Naive thymus-derived CD4-positive, alpha-beta T cell (primary cell): ENCODE measurements at regions of chr3 and their contacts with region 1.

Region 1: DNA sequence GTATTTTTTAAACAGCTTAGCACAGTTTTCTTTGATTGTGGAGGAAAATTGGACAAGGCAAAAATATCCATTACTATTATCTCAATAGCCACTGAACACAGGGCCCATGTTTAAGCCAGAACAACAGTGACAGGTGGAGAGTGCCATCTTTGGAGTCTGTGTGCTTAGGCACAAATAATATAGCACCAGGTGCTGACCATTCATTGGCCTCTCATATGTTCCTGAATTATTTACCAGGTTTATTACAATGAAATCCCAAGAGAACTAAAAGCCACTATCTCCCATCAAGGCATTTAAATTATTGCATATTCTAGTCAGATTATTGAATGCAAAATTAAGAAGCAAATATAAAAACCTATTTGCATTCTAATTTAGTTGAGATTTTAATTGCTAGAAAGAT is 39.6 kb downstream of the GPR156 start:
- DNase-seq: no peak
- ATAC-seq: no peak
- H3K4me3 ChIP-seq: no peak overlapping the region
- H3K4me3 Mint-ChIP-seq: no peak overlapping the region
- H3K27ac ChIP-seq: no peak overlapping the region
- H3K27ac Mint-ChIP-seq: no peak overlapping the region
- H3K4me1 ChIP-seq: no peaks in the 10 kb centered on the region
- H3K4me1 Mint-ChIP-seq: no peaks in the 10 kb centered on the region
- H3K27me3 ChIP-seq: no peaks in the 10 kb centered on the region
- H3K27me3 Mint-ChIP-seq: peaks cover 21 to 38% (median 25%) of the 10 kb centered on the region in 5 donors

Region 2: DNA sequence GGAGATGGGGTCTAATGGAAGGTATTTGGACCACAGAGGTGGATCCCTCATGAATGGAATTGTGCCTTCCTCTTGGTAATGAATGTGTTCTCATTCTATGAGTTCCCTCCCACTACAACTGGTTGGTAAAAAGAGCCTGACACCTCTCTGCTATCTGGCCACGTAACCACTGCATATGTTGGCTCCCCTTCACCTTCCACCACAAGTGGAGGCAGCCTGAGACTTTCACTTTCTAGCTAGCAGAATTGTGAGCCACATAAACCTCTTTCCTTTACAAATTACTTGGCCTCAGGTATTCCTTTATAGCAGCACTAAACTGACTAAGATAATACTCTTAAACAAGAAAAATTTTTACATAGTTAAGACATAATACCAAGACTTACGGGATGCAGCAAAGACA is 308.2 kb before region 1 on chr3:
- CTCF ChIA-PET with region 1: no interaction called
- POLR2A ChIA-PET with region 1: no interaction called
- intact Hi-C with region 1: no loop called
- DNase-seq: peak in 3 of 9 donors; percentile 8 to 49 (median 12)
- ATAC-seq: peak; percentile 73
- H3K4me3 ChIP-seq: no peak overlapping the region
- H3K4me3 Mint-ChIP-seq: peak overlapping the region; percentile 21 to 84 (median 42)
- H3K27ac ChIP-seq: no peak overlapping the region
- H3K27ac Mint-ChIP-seq: peak overlapping the region; percentile 4 to 83 (median 37)
- H3K4me1 ChIP-seq: peaks cover 0 to 11% of the 10 kb centered on the region in 2 donors
- H3K4me1 Mint-ChIP-seq: peaks cover 19 to 78% (median 68%) of the 10 kb centered on the region in 7 donors
- H3K27me3 ChIP-seq: no peaks in the 10 kb centered on the region
- H3K27me3 Mint-ChIP-seq: no peaks in the 10 kb centered on the region

Region 3: DNA sequence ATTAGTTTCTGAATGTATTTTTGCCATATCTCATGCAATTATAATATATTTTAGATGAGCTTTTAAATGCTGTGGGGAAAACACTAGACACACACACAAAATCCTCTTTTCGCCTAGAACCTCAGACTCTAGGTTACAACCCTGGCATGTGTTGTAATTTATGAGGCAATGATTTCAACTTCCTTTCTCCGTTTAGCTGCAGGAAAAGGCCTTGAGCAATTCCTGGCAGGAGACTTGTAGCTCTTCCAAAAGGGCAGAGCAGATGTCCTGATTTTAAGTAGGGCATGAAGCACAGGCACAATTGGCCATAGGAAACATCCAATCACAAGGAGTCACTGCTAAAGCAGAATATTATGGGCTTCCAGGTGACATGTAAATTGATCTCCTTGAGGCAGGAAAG is 42.4 kb before region 1 on chr3:
- CTCF ChIA-PET with region 1: no interaction called
- POLR2A ChIA-PET with region 1: no interaction called
- intact Hi-C with region 1: no loop called
- DNase-seq: no peak
- ATAC-seq: peak; percentile 44
- H3K4me3 ChIP-seq: no peak overlapping the region
- H3K4me3 Mint-ChIP-seq: no peak overlapping the region
- H3K27ac ChIP-seq: no peak overlapping the region
- H3K27ac Mint-ChIP-seq: no peak overlapping the region
- H3K4me1 ChIP-seq: no peaks in the 10 kb centered on the region
- H3K4me1 Mint-ChIP-seq: no peaks in the 10 kb centered on the region
- H3K27me3 ChIP-seq: no peaks in the 10 kb centered on the region
- H3K27me3 Mint-ChIP-seq: peaks cover 0 to 4% (median 0%) of the 10 kb centered on the region in 5 donors

Region 4: DNA sequence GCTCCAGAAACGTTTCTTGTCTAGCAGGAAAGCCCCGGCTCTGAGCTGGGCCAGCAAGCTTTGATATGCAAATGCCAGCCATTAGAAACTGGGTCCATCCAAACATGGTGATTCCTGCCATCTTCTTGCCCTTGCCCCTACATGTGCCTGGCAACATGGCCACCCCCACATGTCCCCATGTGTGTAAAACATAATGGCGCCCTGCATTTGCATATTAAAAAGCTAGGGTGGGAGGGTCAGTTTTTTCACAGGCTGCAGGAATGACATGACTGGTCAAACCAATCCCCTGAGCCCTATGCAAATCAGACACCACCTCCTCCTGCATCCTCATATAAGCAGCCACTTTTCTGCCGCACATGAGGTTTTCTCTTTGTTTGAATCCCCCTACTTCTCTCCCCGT is 18.4 kb after region 1 on chr3:
- CTCF ChIA-PET with region 1: no interaction called
- POLR2A ChIA-PET with region 1: no interaction called
- intact Hi-C with region 1: no loop called
- DNase-seq: no peak
- ATAC-seq: no peak
- H3K4me3 ChIP-seq: no peak overlapping the region
- H3K4me3 Mint-ChIP-seq: no peak overlapping the region
- H3K27ac ChIP-seq: no peak overlapping the region
- H3K27ac Mint-ChIP-seq: no peak overlapping the region
- H3K4me1 ChIP-seq: no peaks in the 10 kb centered on the region
- H3K4me1 Mint-ChIP-seq: no peaks in the 10 kb centered on the region
- H3K27me3 ChIP-seq: no peaks in the 10 kb centered on the region
- H3K27me3 Mint-ChIP-seq: peaks cover 5 to 26% (median 14%) of the 10 kb centered on the region in 5 donors

Region 5: DNA sequence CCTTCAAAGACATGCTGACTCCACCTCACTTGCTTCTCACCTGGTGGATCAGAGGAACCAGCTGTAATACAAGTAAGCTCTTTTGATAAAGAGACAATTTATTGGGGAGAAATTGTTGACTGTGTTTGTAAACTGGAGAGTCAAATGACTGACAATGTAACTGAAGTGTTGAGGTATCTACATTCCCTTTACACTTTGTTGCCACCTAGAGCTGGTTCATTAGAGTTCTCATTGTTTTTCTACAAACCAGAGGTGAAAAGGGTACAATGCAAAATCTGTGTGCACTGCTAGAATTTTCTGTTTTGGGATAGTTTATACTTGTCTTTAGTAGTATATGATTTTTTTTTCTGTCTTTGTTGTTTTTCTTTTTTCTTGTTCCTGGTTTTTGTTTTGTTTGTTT is 112.4 kb after region 1 on chr3:
- CTCF ChIA-PET with region 1: no interaction called
- POLR2A ChIA-PET with region 1: no interaction called
- intact Hi-C with region 1: loop called (anchors 1 kb)
- DNase-seq: no peak
- ATAC-seq: no peak
- H3K4me3 ChIP-seq: no peak overlapping the region
- H3K4me3 Mint-ChIP-seq: no peak overlapping the region
- H3K27ac ChIP-seq: no peak overlapping the region
- H3K27ac Mint-ChIP-seq: no peak overlapping the region
- H3K4me1 ChIP-seq: no peaks in the 10 kb centered on the region
- H3K4me1 Mint-ChIP-seq: no peaks in the 10 kb centered on the region
- H3K27me3 ChIP-seq: peaks cover 0 to 3% of the 10 kb centered on the region in 2 donors
- H3K27me3 Mint-ChIP-seq: peaks cover 9 to 56% (median 18%) of the 10 kb centered on the region in 5 donors

Region 6: GRCh38 chr3:120506828-120507774 is 261.7 kb after region 1 on chr3:
- CTCF ChIA-PET with region 1: no interaction called
- POLR2A ChIA-PET with region 1: no interaction called
- intact Hi-C with region 1: loop called in 1 of 2 experiments (anchors 2 kb)
- DNase-seq: peak in 1 of 9 donors; percentile 2
- ATAC-seq: peak; percentile 26
- H3K4me3 ChIP-seq: no peak overlapping the region
- H3K4me3 Mint-ChIP-seq: no peak overlapping the region
- H3K27ac ChIP-seq: no peak overlapping the region
- H3K27ac Mint-ChIP-seq: no peak overlapping the region
- H3K4me1 ChIP-seq: no peaks in the 10 kb centered on the region
- H3K4me1 Mint-ChIP-seq: peaks cover 0 to 1% (median 0%) of the 10 kb centered on the region in 7 donors
- H3K27me3 ChIP-seq: no peaks in the 10 kb centered on the region
- H3K27me3 Mint-ChIP-seq: peaks cover 27 to 45% (median 33%) of the 10 kb centered on the region in 5 donors

Region 7: GRCh38 chr3:120558771-120559241 is 313.4 kb after region 1 on chr3:
- CTCF ChIA-PET with region 1: interaction called, 18 read pairs
- POLR2A ChIA-PET with region 1: no interaction called
- intact Hi-C with region 1: loop called (anchors 1 kb)
- DNase-seq: peak; percentile 80 to 89 (median 88)
- ATAC-seq: peak; percentile 97
- H3K4me3 ChIP-seq: peak overlapping the region; percentile 61
- H3K4me3 Mint-ChIP-seq: peak overlapping the region; percentile 75 to 87 (median 82)
- H3K27ac ChIP-seq: peak overlapping the region; percentile 58
- H3K27ac Mint-ChIP-seq: peak overlapping the region; percentile 54 to 91 (median 83)
- H3K4me1 ChIP-seq: peaks cover 6% of the 10 kb centered on the region in 2 donors
- H3K4me1 Mint-ChIP-seq: peaks cover 6 to 23% (median 16%) of the 10 kb centered on the region in 7 donors
- H3K27me3 ChIP-seq: peaks cover 0 to 4% of the 10 kb centered on the region in 2 donors
- H3K27me3 Mint-ChIP-seq: peaks cover 0 to 13% (median 7%) of the 10 kb centered on the region in 5 donors